Activated CD4-positive, alpha-beta T cell treated with anti-CD3 and anti-CD28 coated beads, Interleukin-2, amount 10 ng/mL, durations not matched to agents 24 days and 14 days (primary cell): ENCODE measurements at regions of chr19 and their contacts with region 1.

Region 1: DNA sequence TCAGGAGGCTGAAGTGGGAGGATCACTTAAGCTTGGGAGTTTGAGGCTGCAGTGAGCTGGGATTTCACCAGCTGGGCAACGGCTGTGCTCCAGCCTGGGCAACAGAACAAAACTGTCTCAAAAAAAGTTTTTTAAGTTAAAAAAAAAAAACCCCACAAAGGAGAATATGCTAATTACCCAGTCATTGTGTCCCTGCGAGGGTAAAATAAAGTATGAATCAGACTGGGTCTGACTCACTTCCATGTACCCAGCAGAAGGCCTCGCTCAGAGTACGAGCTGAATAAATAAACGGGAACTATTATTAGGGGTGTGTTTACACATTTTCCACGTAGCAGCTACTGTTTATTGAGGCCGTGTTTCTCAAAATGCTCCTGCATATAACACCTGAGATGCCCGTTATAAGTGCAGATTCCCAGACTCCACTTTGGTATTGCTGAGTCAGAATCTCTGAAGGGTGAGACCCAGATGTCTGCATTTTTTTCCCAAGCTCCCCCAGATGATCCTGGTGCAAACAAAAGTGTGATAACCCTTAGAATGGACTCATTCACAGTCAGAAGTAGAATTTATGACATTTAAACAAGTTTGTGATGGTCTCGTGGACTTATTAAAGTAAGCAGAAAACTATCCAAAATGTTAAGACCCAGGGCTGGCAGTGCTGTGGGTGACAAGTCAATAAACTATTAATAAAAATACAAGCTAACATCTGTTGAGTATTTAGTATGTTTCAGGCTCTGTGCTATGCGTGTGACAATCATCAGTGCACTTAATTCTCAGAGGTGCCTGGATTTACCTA is 28.2 kb downstream of the KCNC3 start:
- DNase-seq: no peak
- H3K4me3 Mint-ChIP-seq: no peak overlapping the region
- H3K27ac Mint-ChIP-seq: peak overlapping the region; percentile 74
- H3K4me1 Mint-ChIP-seq: peaks cover 13% of the 10 kb centered on the region
- H3K27me3 Mint-ChIP-seq: peaks cover 9% of the 10 kb centered on the region

Region 2: DNA sequence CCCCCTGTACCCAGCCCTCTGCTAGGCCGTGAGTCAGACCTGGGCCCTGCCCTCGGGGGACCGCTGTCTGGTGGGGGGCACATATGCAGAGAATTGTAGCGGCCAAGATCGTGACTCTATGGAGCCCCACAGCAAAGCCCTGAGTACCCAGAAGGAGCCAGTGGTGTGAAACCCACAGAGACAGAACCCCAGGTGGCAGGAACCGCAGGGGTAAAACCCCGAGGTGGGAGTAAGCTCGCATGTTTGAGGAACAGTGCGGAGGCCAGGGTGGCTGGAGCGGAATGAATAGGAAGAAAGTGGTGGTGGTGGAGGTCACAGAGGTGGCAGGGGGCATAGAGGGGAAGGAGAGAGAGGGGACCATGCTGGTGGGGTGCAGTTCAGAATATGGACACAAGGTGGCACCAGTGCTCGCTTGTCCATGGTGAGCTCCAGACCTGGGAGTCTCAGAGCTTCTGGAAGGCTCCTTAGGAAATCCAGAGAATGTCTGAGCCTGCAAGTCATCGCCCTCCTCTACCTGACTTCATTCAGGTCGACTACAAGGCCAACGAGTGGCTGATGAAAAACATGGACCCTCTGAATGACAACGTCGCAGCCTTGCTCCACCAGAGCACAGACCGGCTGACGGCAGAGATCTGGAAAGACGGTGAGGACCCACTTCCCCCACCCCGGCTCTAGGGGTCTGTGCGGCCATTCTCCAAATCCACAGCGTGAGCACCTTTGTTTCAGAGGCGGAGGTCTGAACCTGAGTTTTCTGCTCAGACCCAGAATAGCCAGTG is 48.7 kb before region 1 on chr19:
- intact Hi-C with region 1: no loop called
- DNase-seq: peak; percentile 74
- H3K4me3 Mint-ChIP-seq: no peak overlapping the region
- H3K27ac Mint-ChIP-seq: no peak overlapping the region
- H3K4me1 Mint-ChIP-seq: no peaks in the 10 kb centered on the region
- H3K27me3 Mint-ChIP-seq: no peaks in the 10 kb centered on the region

Region 3: DNA sequence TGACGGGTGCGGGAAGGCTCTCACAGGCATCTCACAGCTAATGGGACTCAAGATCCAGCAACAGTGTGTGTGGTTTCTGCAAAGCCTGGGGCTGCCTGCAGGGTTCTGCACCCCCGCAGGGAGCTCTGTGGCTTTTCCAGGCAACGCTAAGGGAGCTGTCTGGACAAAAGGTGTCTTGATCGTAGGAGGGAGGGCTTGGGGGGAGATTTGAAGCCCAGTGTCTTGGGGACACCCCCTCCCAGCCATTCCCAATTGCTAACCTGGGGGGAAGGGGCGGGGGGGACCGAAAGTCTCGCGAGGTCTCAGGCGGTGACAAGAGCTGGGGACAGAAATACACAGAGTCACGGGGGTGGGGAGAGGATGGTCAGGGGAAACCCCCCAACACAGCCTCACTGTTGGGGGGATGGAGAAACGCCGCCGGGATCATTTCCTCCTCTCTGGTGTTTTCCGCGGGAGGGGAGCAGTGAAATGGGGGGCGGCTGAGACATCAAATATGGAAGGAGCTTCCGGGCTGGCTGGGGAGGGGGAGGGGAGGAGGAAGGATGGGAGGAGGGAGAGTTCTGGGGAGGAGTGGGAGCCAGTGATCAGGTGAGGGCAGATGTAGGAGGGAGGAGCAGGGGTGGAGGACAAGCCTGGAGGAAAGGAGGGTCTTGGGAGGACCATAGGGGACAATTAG is 14.9 kb after region 1 on chr19:
- intact Hi-C with region 1: loop called (anchors 2 kb)
- DNase-seq: peak; percentile 77
- H3K4me3 Mint-ChIP-seq: peak overlapping the region; percentile 80
- H3K27ac Mint-ChIP-seq: peak overlapping the region; percentile 52
- H3K4me1 Mint-ChIP-seq: peaks cover 15% of the 10 kb centered on the region
- H3K27me3 Mint-ChIP-seq: peaks cover 39% of the 10 kb centered on the region

Region 4: DNA sequence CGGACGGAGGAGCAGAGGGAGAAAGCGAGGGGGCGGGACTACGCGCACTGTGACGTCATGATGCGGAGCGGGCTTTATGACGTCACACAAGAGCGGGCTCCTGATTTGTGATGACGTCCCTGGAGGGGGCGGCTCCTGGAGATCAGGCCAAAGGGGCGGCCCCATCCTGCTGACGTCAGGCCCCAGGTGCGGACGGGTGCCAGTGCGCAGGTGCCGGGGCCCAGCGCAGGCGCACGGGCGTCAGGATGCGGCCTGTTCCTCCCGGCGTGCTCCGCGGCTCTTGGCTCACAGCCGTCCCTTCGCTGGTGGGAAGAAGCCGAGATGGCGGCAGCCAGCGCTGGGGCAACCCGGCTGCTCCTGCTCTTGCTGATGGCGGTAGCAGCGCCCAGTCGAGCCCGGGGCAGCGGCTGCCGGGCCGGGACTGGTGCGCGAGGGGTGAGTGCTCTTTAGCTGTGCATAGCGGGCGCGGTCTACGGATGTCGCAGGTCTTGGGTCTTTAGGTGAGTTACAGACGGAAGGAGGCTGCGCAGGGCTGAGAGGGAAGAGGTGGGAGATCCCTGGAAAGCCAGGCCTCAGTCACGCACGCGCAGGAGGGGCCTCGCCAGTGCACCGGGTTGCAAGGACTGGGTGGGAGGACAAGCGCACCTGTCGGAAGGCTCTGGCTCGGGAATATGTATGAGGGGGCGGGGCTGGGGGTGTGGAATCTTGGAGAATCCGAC is 175.4 kb after region 1 on chr19 and contains the starts of genes EMC10 and GARIN5A:
- intact Hi-C with region 1: no loop called
- DNase-seq: peak; percentile 98
- H3K4me3 Mint-ChIP-seq: peak within 1 kb of the TSS; percentile 100
- H3K27ac Mint-ChIP-seq: peak within 1 kb of the TSS; percentile 93
- H3K4me1 Mint-ChIP-seq: peaks cover 21% of the 10 kb centered on the region
- H3K27me3 Mint-ChIP-seq: no peaks in the 10 kb centered on the region
- total RNA-seq, gene EMC10: 79.2 and 81.6 TPM in 2 replicates
- total RNA-seq, gene GARIN5A: 0.21 and 0.68 TPM in 2 replicates